Astrocyte of the cerebellum (primary cell): ENCODE measurements at regions of chr6 and their contacts with region 1.

Region 1: DNA sequence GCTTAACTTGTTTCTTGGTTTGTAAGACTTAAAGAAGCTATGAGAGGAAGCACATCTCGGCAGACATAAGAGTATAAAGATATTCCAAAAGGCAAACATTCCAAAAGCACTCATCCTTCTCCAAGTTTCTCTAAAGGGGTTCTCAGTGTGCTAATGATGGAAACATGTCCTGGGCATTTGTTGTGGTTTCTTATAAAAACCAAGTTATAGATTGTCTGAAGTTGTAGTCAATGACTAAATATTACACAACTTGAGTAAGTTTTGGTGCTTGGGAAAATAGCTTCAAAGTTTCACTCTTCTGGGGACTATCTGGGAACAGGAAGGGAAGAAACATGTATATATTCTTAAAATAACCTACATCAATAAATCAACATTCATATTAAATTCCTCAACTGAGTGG is 128.3 kb upstream of the TBX18 start:
- DNase-seq: no peak
- H3K4me3 ChIP-seq: no peak overlapping the region
- CTCF ChIP-seq: no peak

Region 2: GRCh38 chr6:84811351-84811750 is 81.3 kb before region 1 on chr6:
- in situ Hi-C with region 1: loop called (anchors 5 kb)
- DNase-seq: no peak
- H3K4me3 ChIP-seq: no peak overlapping the region
- CTCF ChIP-seq: no peak

Region 3: GRCh38 chr6:85143676-85144075 is 251.0 kb after region 1 on chr6:
- in situ Hi-C with region 1: no loop called
- DNase-seq: no peak
- H3K4me3 ChIP-seq: no peak overlapping the region
- CTCF ChIP-seq: no peak